Gastrocnemius medialis (tissue), 4 donors: ENCODE measurements at regions of chr9 and their contacts with region 1.

Region 1: GRCh38 chr9:16705121-16705604 is 165.3 kb downstream of the BNC2 start:
- DNase-seq: peak; percentile 40 to 70
- ATAC-seq: peak; percentile 83 to 88
- H3K4me3 ChIP-seq: peak overlapping the region; percentile 18 to 51 (median 30)
- H3K27ac ChIP-seq: peak overlapping the region; percentile 71 to 83 (median 80)
- H3K4me1 ChIP-seq: peaks cover 5 to 11% of the 10 kb centered on the region in 2 donors
- H3K27me3 ChIP-seq: no peaks in the 10 kb centered on the region
- CTCF ChIP-seq: no peak
- POLR2A ChIP-seq: no peak

Region 2: DNA sequence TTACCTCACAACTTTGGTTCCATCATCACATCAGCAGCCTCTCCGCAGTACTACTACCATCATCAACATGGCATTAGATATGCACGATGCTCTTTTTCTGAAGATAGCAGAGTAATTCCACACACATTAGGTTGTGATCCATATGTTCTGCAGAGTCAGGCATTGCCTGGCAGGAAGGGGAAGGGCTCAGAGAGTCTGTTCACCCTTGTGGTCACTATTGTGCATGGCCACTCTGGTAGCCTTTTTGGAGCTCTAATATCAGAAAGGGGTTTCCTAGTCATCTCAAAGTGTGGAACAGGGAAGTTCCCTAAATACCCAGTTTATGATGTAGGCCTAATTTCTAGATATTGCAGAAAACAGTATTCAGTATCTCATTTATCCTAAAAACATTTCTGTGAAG is 208.3 kb before region 1 on chr9:
- in situ Hi-C with region 1: no loop called
- intact Hi-C with region 1: no loop called
- DNase-seq: no peak
- ATAC-seq: no peak
- H3K4me3 ChIP-seq: no peak overlapping the region
- H3K27ac ChIP-seq: no peak overlapping the region
- H3K4me1 ChIP-seq: no peaks in the 10 kb centered on the region
- H3K27me3 ChIP-seq: no peaks in the 10 kb centered on the region
- CTCF ChIP-seq: no peak
- POLR2A ChIP-seq: no peak

Region 3: DNA sequence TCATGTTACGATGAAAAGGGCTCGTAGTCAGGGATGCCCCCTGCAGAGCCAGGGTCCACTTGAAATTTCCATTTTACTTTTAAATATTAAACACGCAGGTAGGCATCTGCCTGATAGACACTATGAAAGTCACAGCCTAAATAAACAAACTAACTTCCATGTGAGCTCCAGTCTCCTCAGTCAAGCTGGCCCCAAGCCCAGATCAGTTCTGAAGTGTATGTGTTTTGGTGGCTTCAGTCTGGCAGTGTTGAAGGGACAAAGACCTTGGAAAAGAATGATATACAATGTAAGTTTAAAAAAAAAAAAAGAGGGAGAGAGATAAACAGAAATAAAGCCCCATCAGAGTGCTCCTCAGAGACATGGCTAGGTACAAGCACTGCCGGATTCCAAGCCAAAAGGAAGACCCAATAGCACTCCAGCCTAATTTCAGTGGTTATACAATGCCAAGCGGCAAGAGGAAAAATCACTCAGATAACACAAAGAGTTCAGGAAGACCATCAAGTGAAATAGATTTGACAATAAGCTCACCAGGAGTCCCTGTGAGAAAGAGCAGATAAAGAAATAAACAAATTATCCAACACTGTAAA is 15.7 kb before region 1 on chr9:
- in situ Hi-C with region 1: no loop called
- intact Hi-C with region 1: loop called (anchors 1 kb)
- DNase-seq: peak in 1 of 2 donors; percentile 27
- ATAC-seq: peak; percentile 43 to 57
- H3K4me3 ChIP-seq: no peak overlapping the region
- H3K27ac ChIP-seq: peak overlapping the region; percentile 33 to 49 (median 38)
- H3K4me1 ChIP-seq: peaks cover 5 to 20% of the 10 kb centered on the region in 2 donors
- H3K27me3 ChIP-seq: no peaks in the 10 kb centered on the region
- CTCF ChIP-seq: no peak
- POLR2A ChIP-seq: no peak